Activated T-helper 1 cell treated with anti-CD3 and anti-CD28 coated beads, Interleukin-12 subunit alpha, Interleukin-12 subunit beta, Interleukin-2, Interleukin-4 antibody, amounts not matched to agents 30 ng/mL and 10 ng/mL and 1 ng/mL, durations not matched to agents 14 hours and 24 hours and 36 hours (primary cell): ENCODE measurements at regions of chr2 and their contacts with region 1.

Region 1: GRCh38 chr2:173075781-173076580 is at the start of gene MAP3K20:
- DNase-seq: peak; percentile 60
- H3K4me3 Mint-ChIP-seq: peak within 1 kb of the TSS; percentile 86
- H3K27ac Mint-ChIP-seq: peak within 1 kb of the TSS; percentile 77
- H3K4me1 Mint-ChIP-seq: peaks cover 29% of the 10 kb centered on the region
- H3K27me3 Mint-ChIP-seq: peaks cover 19% of the 10 kb centered on the region
- total RNA-seq, gene MAP3K20: 17.7 and 21.8 TPM in 2 replicates

Region 2: DNA sequence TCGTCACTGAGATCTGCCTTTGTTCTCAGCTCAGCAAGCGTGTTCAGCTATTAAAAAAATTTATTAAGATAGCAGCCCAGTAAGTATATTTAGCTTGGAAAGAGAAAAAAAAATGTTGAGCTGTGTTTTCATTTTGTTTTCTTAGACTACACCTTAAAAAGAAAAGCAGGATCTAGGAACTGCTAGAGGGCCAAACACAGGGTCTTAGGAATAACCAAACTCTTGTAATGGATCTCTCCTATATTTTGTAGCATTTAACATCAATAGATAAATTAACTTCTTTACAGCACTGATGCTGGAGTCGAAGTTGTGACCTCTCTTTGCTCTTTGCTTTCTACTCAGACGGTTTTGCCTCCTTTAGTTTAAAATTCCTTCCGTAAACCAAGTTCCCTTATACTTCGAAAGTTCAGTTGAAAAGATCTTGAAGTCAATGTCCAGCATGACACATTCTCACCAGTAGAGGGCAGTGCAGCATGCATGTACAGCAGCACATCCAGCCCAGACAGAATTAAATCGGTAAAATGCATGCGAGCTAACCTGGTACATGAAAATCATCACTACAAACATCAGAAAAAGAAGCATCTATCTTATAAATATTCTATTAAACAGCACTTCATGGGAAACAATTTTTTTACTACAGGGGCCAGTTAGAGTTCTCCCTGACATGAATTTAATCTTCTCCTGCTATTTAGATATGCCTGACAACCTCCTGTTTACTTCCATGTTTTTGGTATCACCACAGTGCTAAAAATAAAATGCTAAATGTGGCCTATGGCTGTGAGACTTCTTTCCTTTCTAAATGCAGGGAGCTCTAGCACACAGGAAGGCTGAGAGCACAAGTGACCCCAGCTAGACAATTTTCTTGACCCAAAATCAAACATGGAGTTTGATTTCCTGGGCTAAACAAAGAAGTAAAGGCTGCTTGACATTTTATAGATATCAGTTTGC is 48.5 kb before region 1 on chr2:
- intact Hi-C with region 1: loop called (anchors 1 kb)
- DNase-seq: peak; percentile 57
- H3K4me3 Mint-ChIP-seq: no peak overlapping the region
- H3K27ac Mint-ChIP-seq: no peak overlapping the region
- H3K4me1 Mint-ChIP-seq: no peaks in the 10 kb centered on the region
- H3K27me3 Mint-ChIP-seq: peaks cover 11% of the 10 kb centered on the region

Region 3: DNA sequence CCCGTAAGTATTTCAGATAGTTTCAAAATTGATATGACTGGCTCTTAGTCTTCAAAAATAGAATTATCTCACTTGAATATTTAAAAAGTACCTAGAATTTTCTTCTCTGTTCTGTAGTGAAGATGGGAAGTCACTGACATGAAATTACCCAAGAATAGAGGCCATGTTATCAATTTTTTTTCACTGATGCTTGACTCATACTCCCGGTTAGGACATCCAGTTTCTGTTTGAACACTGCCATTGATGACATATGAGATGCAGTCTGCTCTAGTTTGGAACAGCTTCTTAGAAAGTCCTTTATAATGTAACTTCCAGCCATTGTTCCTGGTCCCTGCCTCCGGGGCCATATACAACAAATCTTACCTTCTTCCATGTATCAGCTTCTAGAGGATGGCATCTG is 25.7 kb after region 1 on chr2:
- intact Hi-C with region 1: loop called (anchors 2 kb)
- DNase-seq: no peak
- H3K4me3 Mint-ChIP-seq: no peak overlapping the region
- H3K27ac Mint-ChIP-seq: peak overlapping the region; percentile 4
- H3K4me1 Mint-ChIP-seq: peaks cover 31% of the 10 kb centered on the region
- H3K27me3 Mint-ChIP-seq: no peaks in the 10 kb centered on the region

Region 4: DNA sequence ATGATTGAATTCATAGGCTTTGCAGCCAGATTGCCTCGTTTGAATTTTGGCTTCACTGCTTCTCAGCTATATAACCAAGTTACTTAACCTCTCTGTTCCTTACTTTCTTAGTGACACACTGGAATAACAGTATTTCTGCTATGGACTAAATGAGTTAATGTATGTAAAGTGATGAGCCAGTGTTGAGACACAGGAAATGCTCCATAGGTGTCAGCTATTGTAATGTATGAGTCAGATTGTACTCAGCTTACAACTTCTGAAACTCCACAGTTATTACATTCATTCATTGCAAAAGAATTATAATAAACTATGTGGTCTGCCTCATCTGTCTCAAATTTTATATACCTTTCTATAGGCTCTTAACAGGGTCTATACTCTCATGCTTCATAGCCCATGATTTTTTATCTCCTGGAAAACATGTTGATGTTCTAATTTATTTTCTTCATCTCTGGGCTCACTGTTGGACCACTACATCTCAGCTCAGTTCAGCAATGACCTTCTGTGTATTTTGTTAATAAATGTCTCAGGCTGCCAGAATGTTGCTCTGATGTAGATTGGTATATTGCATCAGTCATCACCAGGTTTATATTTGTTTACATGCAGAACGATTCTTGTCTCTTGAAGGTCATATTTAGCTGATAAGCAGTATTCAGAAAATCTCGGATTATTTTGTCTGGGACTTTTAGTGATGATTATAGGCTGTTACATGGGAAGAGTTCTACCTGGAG is 75.9 kb after region 1 on chr2:
- intact Hi-C with region 1: loop called (anchors 1 kb)
- DNase-seq: no peak
- H3K4me3 Mint-ChIP-seq: peak overlapping the region; percentile 53
- H3K27ac Mint-ChIP-seq: peak overlapping the region; percentile 77
- H3K4me1 Mint-ChIP-seq: peaks cover 64% of the 10 kb centered on the region
- H3K27me3 Mint-ChIP-seq: peaks cover 4% of the 10 kb centered on the region

Region 5: DNA sequence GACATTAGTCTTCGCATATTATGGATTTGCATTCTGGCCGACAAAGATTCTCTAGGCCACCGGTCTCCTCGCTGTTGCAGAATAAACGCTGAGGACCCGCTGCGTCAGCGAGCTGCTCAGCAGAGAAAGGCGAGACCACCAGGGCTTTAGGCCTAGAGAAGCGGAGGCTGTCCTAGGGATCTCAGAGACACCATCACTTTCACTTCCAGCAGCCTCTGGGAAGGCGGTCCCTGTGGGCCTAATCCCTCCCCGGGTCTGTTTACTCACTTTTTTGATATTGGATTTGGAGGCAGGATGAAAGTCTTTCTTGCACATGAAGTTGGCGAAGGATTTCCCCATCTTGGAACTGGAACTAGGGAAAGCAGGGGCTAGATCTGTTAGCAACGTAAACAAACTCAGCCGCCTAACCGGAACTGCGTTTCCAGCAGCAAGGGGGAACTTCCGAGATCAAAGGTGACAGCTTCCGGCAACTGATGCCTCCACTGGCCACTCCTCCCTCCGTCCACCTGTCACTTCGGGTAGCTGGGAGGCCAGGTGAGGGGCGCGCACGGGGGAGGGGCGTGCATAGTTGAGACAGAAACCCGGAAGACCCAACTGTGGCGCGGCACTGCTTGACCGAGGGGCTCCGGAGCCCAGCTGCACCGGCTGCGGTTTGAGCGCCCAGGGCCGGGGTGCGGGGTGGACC is 1319.4 kb after region 1 on chr2 and contains the start of gene SCRN3:
- intact Hi-C with region 1: loop called (anchors 5 kb)
- DNase-seq: peak; percentile 74
- H3K4me3 Mint-ChIP-seq: peak within 1 kb of the TSS; percentile 95
- H3K27ac Mint-ChIP-seq: peak within 1 kb of the TSS; percentile 97
- H3K4me1 Mint-ChIP-seq: peaks cover 44% of the 10 kb centered on the region
- H3K27me3 Mint-ChIP-seq: no peaks in the 10 kb centered on the region
- total RNA-seq, gene SCRN3: 14.0 and 19.8 TPM in 2 replicates